Right ventricle myocardium inferior (tissue), 1 donor: ENCODE measurements at regions of chr3 and their contacts with region 1.

Region 1: DNA sequence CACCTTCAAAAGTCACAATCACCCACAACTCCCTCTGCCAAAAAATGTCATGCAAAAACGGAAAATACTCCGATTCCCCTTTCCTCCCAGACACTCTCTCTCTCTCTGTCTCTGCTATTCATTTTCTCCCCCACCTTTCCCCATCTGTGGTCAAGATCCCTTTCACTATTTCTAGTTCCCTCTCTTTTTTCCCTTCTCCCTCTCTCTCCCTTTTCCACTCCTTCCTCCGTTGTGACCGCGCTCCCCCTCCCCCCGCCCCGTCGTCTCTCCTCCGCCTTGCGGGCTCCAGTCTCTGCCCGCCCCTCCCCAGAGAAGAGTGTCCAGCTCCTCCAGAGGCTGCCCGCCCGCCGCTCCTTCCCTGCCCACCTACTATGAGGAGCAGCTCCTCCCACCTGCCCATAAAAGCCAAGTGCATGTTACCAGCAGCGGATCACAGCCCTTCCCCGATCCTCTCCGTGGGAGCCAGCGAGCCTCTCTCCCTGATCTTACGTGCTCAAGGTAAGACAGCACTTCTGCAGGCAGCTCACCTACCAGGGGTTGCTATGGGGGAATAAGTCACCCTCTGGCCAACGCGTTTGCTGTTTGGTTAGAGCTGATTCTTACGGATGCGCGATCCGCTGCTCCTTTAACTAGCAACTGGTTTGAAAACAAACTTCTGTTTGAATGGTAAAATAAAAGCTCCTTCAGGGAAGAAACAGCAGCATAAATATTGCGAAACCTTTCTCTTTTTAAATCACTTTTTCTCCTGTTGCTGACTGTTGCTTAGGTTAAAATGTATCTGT is at the start of gene COL8A1:
- DNase-seq: peak; percentile 75
- ATAC-seq: peak; percentile 89
- total RNA-seq, gene COL8A1: 14.1 TPM

Region 2: GRCh38 chr3:99753268-99753975 is 115.1 kb after region 1 on chr3:
- intact Hi-C with region 1: loop called (anchors 5 kb)
- DNase-seq: no peak
- ATAC-seq: peak; percentile 77

Region 3: DNA sequence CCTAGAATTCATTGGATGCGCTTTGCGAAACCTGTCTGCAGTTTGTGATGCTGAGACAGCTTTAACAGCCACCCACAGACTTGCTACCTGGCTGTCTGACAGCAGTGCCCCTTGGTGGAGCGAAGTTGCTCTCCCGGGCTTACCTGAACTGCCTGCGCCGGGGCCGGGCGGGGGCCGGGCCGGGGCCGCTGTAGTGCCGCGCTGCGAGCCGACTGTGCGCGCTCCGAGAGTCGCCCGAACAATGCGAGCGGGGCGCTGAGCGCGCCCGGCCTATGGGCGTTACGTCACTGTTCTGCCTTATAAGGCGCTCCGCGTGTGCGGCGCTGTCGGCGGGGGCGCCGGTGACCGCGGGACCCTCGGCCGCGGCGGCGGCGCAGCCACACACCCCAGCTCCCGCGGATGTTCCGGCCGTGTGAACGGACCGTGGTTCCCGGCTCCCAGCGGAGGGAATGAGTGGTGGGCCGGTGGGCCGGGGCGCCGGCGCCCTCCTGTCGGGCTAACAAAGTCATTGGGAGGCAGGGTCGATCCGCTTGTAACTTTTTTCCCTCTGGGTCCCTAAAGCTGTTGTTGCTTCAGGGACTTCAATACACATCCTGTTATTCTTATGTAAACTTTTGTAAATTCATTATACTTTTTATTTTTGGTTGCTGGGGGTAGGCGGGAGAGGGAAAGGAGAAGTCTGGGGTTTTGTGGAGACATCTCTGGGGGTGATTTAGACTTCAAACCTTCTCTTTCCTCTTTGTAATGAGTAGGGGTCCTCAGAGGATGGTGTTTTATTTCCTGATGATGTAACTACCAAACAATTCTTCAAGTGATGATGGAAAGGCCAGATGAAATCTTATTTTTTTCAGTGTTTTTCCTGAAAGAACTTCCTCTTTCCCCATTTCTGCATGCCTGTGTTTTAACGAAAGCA is 237.8 kb after region 1 on chr3:
- intact Hi-C with region 1: no loop called
- DNase-seq: peak; percentile 92
- ATAC-seq: peak; percentile 97